RWPE1 (cell line): ENCODE measurements at regions of chr4 and their contacts with region 1.

Region 1: DNA sequence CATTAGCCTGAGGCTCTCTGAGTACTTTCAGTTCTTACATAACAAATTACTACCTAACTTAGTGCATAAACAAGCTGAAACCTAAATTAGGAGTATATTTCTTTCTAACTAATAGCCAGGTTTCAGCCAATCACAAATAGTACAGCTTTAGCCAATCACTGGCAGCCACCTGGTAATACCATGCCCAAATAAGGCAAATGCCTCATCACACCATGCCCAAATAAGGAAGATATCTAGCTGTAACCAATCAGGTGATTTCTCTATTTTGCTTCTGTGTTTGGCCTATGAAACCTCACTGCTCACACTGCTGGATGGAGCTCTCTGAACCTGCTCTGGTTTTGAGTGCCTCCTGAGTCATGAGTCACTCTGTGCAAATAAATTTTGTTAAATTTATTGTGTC is 113.5 kb downstream of the DDIT4L start:
- DNase-seq: no peak
- H3K27ac ChIP-seq: no peak overlapping the region
- CTCF ChIP-seq: no peak

Region 2: DNA sequence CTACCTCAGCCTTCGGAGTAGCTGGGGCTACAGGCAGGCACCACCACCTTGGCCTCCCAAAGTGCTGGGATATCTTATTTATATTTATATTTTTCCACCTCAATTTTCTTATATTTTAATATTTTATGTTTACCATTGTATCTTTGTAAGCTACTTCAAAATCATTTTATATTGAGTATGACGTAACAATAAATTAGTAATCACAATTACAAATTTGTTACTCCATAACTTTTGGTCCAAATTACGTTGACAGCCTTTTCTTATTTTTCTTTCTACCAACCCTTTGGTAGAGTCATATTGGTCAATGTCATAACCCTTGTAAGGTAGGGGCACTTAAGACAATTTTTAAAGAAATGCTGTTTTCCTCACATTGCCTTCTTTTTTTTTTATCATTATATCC is 22.7 kb before region 1 on chr4:
- CTCF ChIA-PET with region 1: interaction called, 10 read pairs
- POLR2A ChIA-PET with region 1: no interaction called
- DNase-seq: no peak
- H3K27ac ChIP-seq: no peak overlapping the region
- CTCF ChIP-seq: no peak

Region 3: GRCh38 chr4:100130491-100130890 is 53.7 kb after region 1 on chr4:
- CTCF ChIA-PET with region 1: no interaction called
- POLR2A ChIA-PET with region 1: no interaction called
- DNase-seq: no peak
- H3K27ac ChIP-seq: no peak overlapping the region
- CTCF ChIP-seq: no peak